Transverse colon (tissue), 4 donors: ENCODE measurements at regions of chr1 and their contacts with region 1.

Region 1: GRCh38 chr1:218759795-218760194 is 413.9 kb upstream of the LYPLAL1 start:
- DNase-seq: no peak
- H3K4me3 ChIP-seq: no peak overlapping the region
- H3K27ac ChIP-seq: no peak overlapping the region
- H3K4me1 ChIP-seq: no peaks in the 10 kb centered on the region
- H3K27me3 ChIP-seq: no peaks in the 10 kb centered on the region
- CTCF ChIP-seq: no peak
- EP300 ChIP-seq: no peak
- POLR2A ChIP-seq: no peak

Region 2: DNA sequence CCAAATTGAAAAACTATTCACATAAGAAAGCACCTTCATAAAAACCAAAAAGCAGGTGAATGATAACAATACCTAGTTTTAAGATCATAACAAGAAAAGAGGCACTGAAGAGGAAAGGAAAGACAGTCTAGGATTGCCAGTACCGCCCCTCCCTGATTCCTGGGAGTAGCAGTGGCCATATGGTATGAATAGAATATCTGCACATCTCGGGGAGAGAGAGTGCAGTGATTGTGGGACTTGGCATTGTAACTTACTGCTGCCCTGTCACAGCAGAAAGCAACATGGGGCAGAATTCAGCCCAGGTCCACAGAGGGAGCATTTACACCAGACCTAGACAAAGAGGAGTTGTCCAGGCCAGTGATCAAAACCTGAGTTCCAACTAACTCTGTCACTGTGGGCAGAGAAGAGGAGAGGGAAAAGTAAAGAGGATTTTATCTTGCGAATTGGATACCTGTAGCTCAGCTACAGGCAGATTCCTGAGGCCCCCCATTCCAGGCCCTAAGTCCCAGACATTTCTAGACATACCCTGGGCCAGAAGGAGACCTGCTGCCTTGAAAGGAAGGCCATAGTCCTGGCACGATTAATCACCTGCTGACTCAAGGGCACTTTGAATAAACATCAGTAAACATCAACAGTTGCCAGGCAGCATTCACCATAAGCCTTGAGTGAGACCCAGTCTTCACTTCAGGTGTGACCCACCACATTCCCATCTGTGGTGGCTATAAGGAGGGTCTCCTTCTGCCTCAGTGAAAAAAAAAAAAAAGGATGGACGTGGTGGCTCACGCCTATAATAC is 17.1 kb before region 1 on chr1:
- in situ Hi-C with region 1: no loop called
- intact Hi-C with region 1: loop called (anchors 1 kb)
- DNase-seq: no peak
- H3K4me3 ChIP-seq: no peak overlapping the region
- H3K27ac ChIP-seq: no peak overlapping the region
- H3K4me1 ChIP-seq: no peaks in the 10 kb centered on the region
- H3K27me3 ChIP-seq: no peaks in the 10 kb centered on the region
- CTCF ChIP-seq: no peak
- EP300 ChIP-seq: no peak
- POLR2A ChIP-seq: no peak

Region 3: DNA sequence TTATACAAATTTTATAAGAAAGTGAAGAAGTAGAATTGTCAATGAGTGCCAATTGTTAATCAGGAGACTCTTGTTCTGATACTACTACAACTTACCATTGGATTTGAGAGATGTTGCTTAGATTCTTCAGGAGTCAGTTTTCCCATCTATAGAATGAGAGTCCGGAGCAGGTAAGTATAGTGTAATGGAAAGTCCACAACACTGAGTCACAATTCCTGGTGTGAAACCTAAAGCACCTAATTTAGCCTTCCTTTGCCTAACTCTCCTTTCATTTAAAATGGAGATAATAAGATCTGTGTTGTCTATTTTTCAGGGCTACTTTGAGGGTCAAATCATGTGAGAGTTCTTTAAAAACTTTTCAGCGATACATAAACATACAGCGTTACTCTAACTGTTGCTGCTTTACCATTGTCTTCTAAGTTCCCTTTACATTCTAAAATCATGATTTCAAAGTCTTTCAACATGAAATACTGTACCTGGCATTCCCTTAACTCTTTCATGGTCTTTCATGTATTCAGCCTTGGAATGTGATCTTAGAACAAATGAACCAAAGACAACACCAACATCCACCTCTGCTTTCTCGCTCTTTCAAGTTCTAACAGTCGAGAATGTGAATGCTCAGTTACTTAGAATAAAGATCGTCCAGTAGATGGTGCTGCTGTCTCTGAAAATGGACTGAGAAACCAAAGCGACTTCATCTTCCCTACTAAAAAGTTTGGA is 1077.6 kb after region 1 on chr1:
- in situ Hi-C with region 1: no loop called
- intact Hi-C with region 1: no loop called
- DNase-seq: no peak
- H3K4me3 ChIP-seq: no peak overlapping the region
- H3K27ac ChIP-seq: no peak overlapping the region
- H3K4me1 ChIP-seq: no peaks in the 10 kb centered on the region
- H3K27me3 ChIP-seq: peaks cover 56% of the 10 kb centered on the region
- CTCF ChIP-seq: peak; percentile 35 to 54 (median 42)
- EP300 ChIP-seq: no peak
- POLR2A ChIP-seq: no peak